Caco-2 (cell line): ENCODE measurements at regions of chr7 and their contacts with region 1.

Region 1: GRCh38 chr7:16702440-16702839 is 51.1 kb upstream of the TSPAN13 start:
- DNase-seq: peak in 1 of 2 experiments; percentile 34
- H3K4me3 ChIP-seq: no peak overlapping the region
- H3K4me3 Mint-ChIP-seq: no peak overlapping the region
- H3K27ac Mint-ChIP-seq: no peak overlapping the region
- H3K4me1 ChIP-seq: peaks cover 6% of the 10 kb centered on the region
- H3K4me1 Mint-ChIP-seq: peaks cover 5% of the 10 kb centered on the region
- H3K27me3 ChIP-seq: no peaks in the 10 kb centered on the region
- H3K27me3 Mint-ChIP-seq: no peaks in the 10 kb centered on the region
- CTCF ChIP-seq: peak in 1 of 2 experiments; percentile 45

Region 2: DNA sequence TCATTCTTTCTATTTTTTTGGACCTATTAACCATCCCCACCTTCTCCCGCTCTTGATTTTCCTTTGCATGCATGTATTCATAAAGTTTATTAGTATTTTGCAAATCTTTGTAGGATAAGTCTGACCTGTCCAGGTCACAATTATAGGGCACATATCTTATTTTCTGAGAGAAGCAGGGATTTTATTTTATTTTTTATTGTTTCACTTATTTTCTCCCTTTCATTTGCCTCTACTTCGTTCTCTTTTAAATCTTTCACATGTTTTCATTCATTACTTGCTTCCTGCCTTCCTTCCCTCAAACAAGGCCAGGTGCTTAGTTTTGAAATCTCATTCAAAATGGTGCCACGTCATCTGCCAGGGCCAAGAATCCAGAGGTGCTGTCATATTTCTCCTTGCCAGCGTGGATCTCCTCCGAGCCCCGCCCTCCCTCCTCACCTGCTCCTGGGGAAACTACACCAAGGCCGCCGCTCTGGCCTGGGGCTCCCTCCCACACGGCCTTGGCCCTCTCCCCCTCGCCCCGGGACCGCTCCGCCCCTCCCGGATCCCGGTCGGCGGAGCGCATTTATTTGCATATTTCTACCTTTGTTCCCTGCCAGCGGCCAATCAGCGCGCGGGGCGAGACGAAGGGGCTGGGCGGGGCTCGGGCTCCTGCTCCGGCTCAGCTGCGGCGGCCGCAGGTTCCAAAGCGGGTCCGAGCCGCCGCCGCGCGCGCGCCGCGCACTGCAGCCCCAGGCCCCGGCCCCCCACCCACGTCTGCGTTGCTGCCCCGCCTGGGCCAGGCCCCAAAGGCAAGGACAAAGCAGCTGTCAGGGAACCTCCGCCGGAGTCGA is 50.9 kb after region 1 on chr7 and contains the start of gene TSPAN13:
- CTCF ChIA-PET with region 1: interaction called, 6 read pairs
- POLR2A ChIA-PET with region 1: interaction called, 3 read pairs
- intact Hi-C with region 1: loop called (anchors 1 kb)
- DNase-seq: peak; percentile 98 to 99
- H3K4me3 ChIP-seq: peak within 1 kb of the TSS; percentile 91
- H3K4me3 Mint-ChIP-seq: peak within 1 kb of the TSS; percentile 92
- H3K27ac Mint-ChIP-seq: peak within 1 kb of the TSS; percentile 91
- H3K4me1 ChIP-seq: peaks cover 20% of the 10 kb centered on the region
- H3K4me1 Mint-ChIP-seq: peaks cover 20% of the 10 kb centered on the region
- H3K27me3 ChIP-seq: no peaks in the 10 kb centered on the region
- H3K27me3 Mint-ChIP-seq: no peaks in the 10 kb centered on the region
- CTCF ChIP-seq: no peak
- total RNA-seq, gene TSPAN13: 193 and 208 TPM in 2 replicates

Region 3: DNA sequence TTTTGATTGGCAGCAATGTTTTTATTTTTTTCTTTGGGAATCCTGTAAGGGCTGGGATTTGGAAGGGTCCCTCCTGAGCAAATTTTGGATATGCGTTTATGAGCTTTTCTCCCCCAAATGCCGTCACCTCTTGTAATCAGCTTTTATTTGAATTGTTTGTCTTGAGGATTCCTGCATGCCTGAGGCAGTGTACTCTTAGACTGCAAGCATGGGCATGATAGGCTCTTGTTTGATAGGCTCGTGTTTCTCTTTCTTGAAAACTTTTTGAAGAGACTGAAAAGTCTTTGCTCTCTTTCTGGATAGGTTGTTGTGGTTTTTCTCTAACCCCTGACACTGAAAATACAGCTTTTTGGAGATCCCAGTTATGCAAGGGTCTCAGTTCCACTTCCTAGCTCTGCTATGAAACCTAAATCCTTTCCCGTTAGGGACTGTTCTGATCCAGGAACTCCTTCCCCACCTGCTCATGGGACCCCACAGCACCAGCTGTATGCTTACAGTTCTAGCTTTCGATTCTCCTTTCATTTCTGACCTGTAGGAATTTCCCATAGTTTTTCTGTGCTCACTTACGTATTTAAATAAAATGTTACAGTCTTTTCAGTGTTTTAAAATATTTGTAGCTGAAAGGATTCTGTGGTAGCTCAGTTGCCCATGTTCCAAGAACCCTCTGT is 68.4 kb after region 1 on chr7:
- CTCF ChIA-PET with region 1: interaction called, 6 read pairs
- POLR2A ChIA-PET with region 1: no interaction called
- intact Hi-C with region 1: loop called (anchors 5 kb)
- DNase-seq: peak in 1 of 2 experiments; percentile 43
- H3K4me3 ChIP-seq: no peak overlapping the region
- H3K4me3 Mint-ChIP-seq: peak overlapping the region; percentile 71
- H3K27ac Mint-ChIP-seq: peak overlapping the region; percentile 76
- H3K4me1 ChIP-seq: peaks cover 57% of the 10 kb centered on the region
- H3K4me1 Mint-ChIP-seq: peaks cover 41% of the 10 kb centered on the region
- H3K27me3 ChIP-seq: no peaks in the 10 kb centered on the region
- H3K27me3 Mint-ChIP-seq: no peaks in the 10 kb centered on the region
- CTCF ChIP-seq: no peak

Region 4: GRCh38 chr7:16786257-16786656 is 83.8 kb after region 1 on chr7:
- CTCF ChIA-PET with region 1: interaction called, 5 read pairs
- POLR2A ChIA-PET with region 1: no interaction called
- intact Hi-C with region 1: loop called (anchors 2 kb)
- DNase-seq: no peak
- H3K4me3 ChIP-seq: no peak overlapping the region
- H3K4me3 Mint-ChIP-seq: no peak overlapping the region
- H3K27ac Mint-ChIP-seq: no peak overlapping the region
- H3K4me1 ChIP-seq: peaks cover 27% of the 10 kb centered on the region
- H3K4me1 Mint-ChIP-seq: peaks cover under 1% of the 10 kb centered on the region
- H3K27me3 ChIP-seq: no peaks in the 10 kb centered on the region
- H3K27me3 Mint-ChIP-seq: no peaks in the 10 kb centered on the region
- CTCF ChIP-seq: no peak

Region 5: GRCh38 chr7:16791895-16792294 is 89.5 kb after region 1 on chr7:
- CTCF ChIA-PET with region 1: interaction called, 5 read pairs
- POLR2A ChIA-PET with region 1: no interaction called
- intact Hi-C with region 1: loop called (anchors 1 kb)
- DNase-seq: no peak
- H3K4me3 ChIP-seq: no peak overlapping the region
- H3K4me3 Mint-ChIP-seq: no peak overlapping the region
- H3K27ac Mint-ChIP-seq: no peak overlapping the region
- H3K4me1 ChIP-seq: peaks cover 9% of the 10 kb centered on the region
- H3K4me1 Mint-ChIP-seq: peaks cover 13% of the 10 kb centered on the region
- H3K27me3 ChIP-seq: no peaks in the 10 kb centered on the region
- H3K27me3 Mint-ChIP-seq: no peaks in the 10 kb centered on the region
- CTCF ChIP-seq: no peak

Region 6: DNA sequence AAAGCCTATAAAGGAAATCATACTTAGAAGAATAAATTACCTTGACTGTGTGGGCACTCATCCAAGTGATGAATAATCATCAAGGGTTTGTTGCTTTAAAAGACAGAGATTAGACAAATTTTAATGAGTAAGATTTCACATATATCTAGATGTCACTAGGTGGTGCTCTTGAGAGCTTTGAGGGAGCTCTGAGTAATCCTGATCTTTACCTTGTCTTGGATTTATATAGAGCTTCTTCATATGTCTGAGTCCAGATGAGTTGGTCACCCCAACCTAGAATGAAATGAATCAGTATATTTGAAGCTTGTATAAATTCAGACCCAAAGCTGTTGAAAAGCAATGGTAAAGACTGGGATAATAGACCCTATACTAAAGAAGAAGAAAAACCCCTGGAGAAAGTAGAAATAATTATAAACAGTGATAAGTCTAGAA is 98.7 kb after region 1 on chr7:
- CTCF ChIA-PET with region 1: interaction called, 5 read pairs
- POLR2A ChIA-PET with region 1: no interaction called
- intact Hi-C with region 1: loop called (anchors 1 kb)
- DNase-seq: peak in 1 of 2 experiments; percentile 44
- H3K4me3 ChIP-seq: no peak overlapping the region
- H3K4me3 Mint-ChIP-seq: peak overlapping the region; percentile 20
- H3K27ac Mint-ChIP-seq: peak overlapping the region; percentile 13
- H3K4me1 ChIP-seq: peaks cover 29% of the 10 kb centered on the region
- H3K4me1 Mint-ChIP-seq: peaks cover 16% of the 10 kb centered on the region
- H3K27me3 ChIP-seq: no peaks in the 10 kb centered on the region
- H3K27me3 Mint-ChIP-seq: no peaks in the 10 kb centered on the region
- CTCF ChIP-seq: peak in 1 of 2 experiments; percentile 54

Region 7: DNA sequence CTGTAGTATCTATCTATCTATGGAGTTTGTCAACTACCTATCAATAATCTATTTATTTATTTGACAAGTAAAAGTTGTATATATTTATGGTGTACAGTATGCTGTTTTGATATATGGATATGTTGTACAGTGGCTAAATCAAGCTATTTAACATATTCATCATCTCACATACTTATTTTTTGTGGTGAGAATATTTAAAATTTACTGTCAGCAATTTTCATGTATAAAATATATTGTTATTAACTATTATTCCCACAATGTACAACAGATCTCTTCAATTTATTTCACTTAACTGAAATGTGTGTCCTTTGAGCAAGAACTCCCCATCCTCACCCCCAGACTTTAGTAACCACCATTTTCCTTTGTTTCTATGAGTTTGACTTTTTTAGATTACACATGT is 164.9 kb after region 1 on chr7:
- CTCF ChIA-PET with region 1: no interaction called
- POLR2A ChIA-PET with region 1: no interaction called
- intact Hi-C with region 1: no loop called
- DNase-seq: no peak
- H3K4me3 ChIP-seq: no peak overlapping the region
- H3K4me3 Mint-ChIP-seq: no peak overlapping the region
- H3K27ac Mint-ChIP-seq: no peak overlapping the region
- H3K4me1 ChIP-seq: peaks cover 18% of the 10 kb centered on the region
- H3K4me1 Mint-ChIP-seq: peaks cover 24% of the 10 kb centered on the region
- H3K27me3 ChIP-seq: no peaks in the 10 kb centered on the region
- H3K27me3 Mint-ChIP-seq: no peaks in the 10 kb centered on the region
- CTCF ChIP-seq: no peak

Region 8: GRCh38 chr7:16918288-16918895 is 216.0 kb after region 1 on chr7:
- CTCF ChIA-PET with region 1: no interaction called
- POLR2A ChIA-PET with region 1: no interaction called
- intact Hi-C with region 1: loop called (anchors 1 kb)
- DNase-seq: peak in 1 of 2 experiments; percentile 52
- H3K4me3 ChIP-seq: no peak overlapping the region
- H3K4me3 Mint-ChIP-seq: no peak overlapping the region
- H3K27ac Mint-ChIP-seq: peak overlapping the region; percentile 50
- H3K4me1 ChIP-seq: peaks cover 51% of the 10 kb centered on the region
- H3K4me1 Mint-ChIP-seq: peaks cover 38% of the 10 kb centered on the region
- H3K27me3 ChIP-seq: no peaks in the 10 kb centered on the region
- H3K27me3 Mint-ChIP-seq: no peaks in the 10 kb centered on the region
- CTCF ChIP-seq: peak; percentile 58 to 82